GM18951 (cell line): ENCODE measurements at regions of chr2 and their contacts with region 1.

Region 1: GRCh38 chr2:213246497-213247281 is 37.6 kb upstream of the SPAG16 start:
- POLR2A ChIP-seq: no peak

Region 2: DNA sequence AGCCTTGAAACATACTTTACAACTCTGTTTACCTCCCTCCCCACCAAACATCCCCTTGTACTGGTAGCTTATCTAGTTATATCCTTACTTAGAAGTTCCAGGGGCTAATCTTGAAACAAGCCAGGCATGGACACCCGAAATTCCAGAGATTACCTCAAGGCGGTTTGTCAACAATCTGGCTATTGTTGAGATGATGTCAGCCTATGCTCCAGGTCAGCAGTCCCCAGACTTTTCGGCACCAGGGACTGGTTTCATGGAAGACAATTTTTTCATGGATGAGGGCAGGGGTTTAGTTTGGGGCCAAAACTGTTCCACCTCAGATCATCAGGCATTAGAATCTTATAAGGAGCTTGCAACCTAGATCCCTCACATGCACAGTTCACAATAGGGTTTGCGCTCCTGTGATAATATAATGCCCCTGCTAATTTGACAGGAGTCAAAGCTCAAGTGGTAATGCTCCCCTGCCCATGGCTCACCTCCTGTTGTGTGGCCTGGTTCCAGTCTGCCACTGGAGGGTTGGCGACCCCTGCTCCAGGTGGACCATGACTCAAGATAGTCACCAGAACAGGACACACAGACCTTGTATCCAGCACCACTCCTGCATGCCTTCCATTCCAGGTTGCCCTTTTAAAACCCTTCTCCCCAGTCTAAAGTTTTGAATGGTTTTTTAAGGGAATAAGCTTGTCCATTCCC is 208.8 kb after region 1 on chr2:
- in situ Hi-C with region 1: no loop called
- POLR2A ChIP-seq: no peak

Region 3: GRCh38 chr2:213934560-213934959 is 687.9 kb after region 1 on chr2:
- in situ Hi-C with region 1: loop called (anchors 10 kb)
- POLR2A ChIP-seq: no peak